SK-N-SH (cell line): ENCODE measurements at regions of chr21 and their contacts with region 1.

Region 1: DNA sequence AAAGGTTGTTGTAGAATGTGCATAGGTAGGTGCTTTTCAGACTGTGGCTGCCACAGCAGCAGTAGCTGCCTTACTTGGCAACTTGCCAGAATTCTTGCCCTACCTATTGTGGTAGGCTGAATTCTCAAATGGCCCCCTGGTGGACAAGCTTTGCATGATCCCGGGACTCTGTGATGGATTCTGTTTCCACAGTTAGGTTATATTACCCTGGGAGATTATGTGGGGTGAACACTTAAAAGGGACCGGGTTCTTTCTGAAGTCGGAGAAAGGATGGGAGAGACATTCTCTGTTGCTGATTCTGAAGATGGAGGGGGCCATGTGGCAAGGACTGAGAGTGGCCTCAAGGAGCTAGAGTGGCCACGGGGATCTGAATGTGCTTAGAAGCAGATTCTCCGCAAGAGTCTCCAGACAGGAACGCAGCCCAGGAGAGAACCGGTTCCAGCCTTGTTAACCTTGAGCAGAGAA is 32.1 kb upstream of the KCNE1 start:
- DNase-seq: peak; percentile 72
- H3K4me3 ChIP-seq: no peak overlapping the region
- H3K27ac ChIP-seq: peak overlapping the region in 1 of 2 experiments; percentile 73; a peak in 1 of 4 replicates
- H3K4me1 ChIP-seq: peaks cover 2 to 16% of the 10 kb centered on the region in 2 experiments; a peak in 3 of 4 replicates
- H3K27me3 ChIP-seq: no peaks in the 10 kb centered on the region
- CTCF ChIP-seq: peak; percentile 71
- EP300 ChIP-seq: no peak
- RAD21 ChIP-seq: peak; percentile 58

Region 2: GRCh38 chr21:34526618-34527290 is 17.3 kb before region 1 on chr21:
- CTCF ChIA-PET with region 1: interaction called, 16 read pairs
- POLR2A ChIA-PET with region 1: no interaction called
- DNase-seq: no peak
- H3K4me3 ChIP-seq: peak overlapping the region; percentile 49 to 64; a peak in 3 of 4 replicates
- H3K27ac ChIP-seq: peak overlapping the region; percentile 85 to 94
- H3K4me1 ChIP-seq: peaks cover 3 to 5% of the 10 kb centered on the region in 2 experiments; a peak in 3 of 4 replicates
- H3K27me3 ChIP-seq: no peaks in the 10 kb centered on the region
- CTCF ChIP-seq: no peak
- EP300 ChIP-seq: peak in 1 of 2 experiments; percentile 81; a peak in 1 of 4 replicates
- RAD21 ChIP-seq: no peak